Heart right ventricle (tissue), 16 donors: ENCODE measurements at regions of chr2 and their contacts with region 1.

Region 1: DNA sequence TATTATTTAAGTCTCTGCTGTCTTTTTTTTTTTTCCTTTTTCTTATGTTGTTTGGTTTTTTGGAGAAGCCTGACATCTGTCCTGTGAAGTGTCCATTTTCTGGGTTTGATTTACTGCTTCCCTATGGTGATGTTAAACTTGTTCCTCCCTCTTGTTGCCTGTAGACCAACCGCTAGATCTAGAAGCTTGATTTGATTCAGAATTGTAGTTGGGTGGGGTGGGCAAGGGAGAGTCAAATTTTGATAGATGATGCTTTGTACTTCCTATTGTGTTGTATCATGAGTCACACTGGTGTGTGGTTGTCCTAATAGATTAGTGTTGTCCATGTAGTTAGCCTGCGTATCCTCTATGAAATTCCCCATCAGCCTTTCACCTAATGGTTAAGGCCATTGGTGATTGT is 35.4 kb downstream of the CAB39 start:
- DNase-seq: no peak
- ATAC-seq: no peak
- H3K4me3 ChIP-seq: no peak overlapping the region
- H3K27ac ChIP-seq: no peak overlapping the region
- H3K4me1 ChIP-seq: peaks cover 0 to 45% (median 24%) of the 10 kb centered on the region in 9 donors
- H3K27me3 ChIP-seq: no peaks in the 10 kb centered on the region
- CTCF ChIP-seq: no peak

Region 2: DNA sequence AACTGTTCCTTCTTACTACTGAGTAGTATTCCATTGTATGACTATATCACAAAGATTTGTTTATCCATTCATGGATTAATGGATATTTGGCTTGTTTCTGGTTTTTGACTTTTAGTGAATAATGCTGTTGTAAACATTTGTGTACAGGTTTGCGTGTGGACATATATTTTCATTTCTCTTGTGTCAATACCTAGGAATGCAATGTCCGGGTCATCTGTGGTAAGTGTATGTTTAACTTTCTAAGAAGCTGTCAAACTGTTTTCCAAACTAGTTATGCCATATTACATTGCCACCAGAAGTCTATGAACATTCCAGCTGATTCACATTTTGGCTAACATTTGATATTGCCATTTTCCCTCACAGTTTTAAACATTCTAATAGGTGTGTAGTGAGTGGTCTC is 650.2 kb before region 1 on chr2:
- intact Hi-C with region 1: no loop called
- DNase-seq: no peak
- ATAC-seq: no peak
- H3K4me3 ChIP-seq: no peak overlapping the region
- H3K27ac ChIP-seq: no peak overlapping the region
- H3K4me1 ChIP-seq: no peaks in the 10 kb centered on the region
- H3K27me3 ChIP-seq: no peaks in the 10 kb centered on the region
- CTCF ChIP-seq: no peak

Region 3: DNA sequence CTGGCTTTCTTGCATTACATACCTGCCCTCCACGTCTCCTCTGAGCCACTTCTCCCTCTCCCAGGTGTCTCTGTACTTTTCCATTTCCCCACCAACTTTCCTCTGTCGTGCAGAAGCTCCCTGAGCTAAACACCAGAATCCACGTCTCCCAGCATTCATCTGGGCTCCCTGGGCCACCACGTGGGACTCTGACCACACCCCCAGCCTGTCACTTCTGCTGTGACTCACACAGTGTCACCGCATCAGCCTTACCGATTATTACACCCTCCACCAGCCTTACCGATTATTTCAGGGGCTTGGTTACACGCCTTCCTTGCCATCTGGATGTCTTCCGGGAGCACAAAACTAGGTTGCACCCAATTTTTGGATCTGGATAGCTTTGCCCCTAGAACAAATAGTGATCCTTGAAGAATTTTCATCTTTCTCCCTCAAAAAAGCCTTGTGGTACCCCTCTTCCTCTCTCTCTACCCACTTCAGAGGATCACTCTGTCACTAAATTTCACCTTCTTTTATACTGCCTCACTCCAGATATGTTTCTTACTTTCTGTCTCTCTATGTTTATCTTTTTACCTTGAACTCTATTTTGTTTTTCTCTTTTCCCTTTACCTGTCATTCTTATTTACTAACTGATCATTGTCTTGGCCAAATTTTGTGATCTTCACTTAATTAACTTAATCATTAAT is 172.3 kb before region 1 on chr2:
- intact Hi-C with region 1: no loop called
- DNase-seq: no peak
- ATAC-seq: no peak
- H3K4me3 ChIP-seq: no peak overlapping the region
- H3K27ac ChIP-seq: peak overlapping the region in 1 of 10 donors; percentile 6
- H3K4me1 ChIP-seq: no peaks in the 10 kb centered on the region
- H3K27me3 ChIP-seq: peaks cover 0 to 18% (median 7%) of the 10 kb centered on the region in 7 donors
- CTCF ChIP-seq: no peak

Region 4: GRCh38 chr2:230793572-230794359 is 45.7 kb after region 1 on chr2:
- intact Hi-C with region 1: loop called in 1 of 10 experiments (anchors 5 kb)
- DNase-seq: peak; percentile 29 to 69
- ATAC-seq: peak; percentile 62 to 88 (median 78)
- H3K4me3 ChIP-seq: no peak overlapping the region
- H3K27ac ChIP-seq: peak overlapping the region in 8 of 10 donors; percentile 13 to 86 (median 40)
- H3K4me1 ChIP-seq: peaks cover 0 to 83% (median 54%) of the 10 kb centered on the region in 9 donors
- H3K27me3 ChIP-seq: no peaks in the 10 kb centered on the region
- CTCF ChIP-seq: no peak